AG04449 (cell line): ENCODE measurements at regions of chr2 and their contacts with region 1.

Region 1: GRCh38 chr2:18378020-18378653 is 182.3 kb downstream of the RDH14 start:
- DNase-seq: no peak
- H3K4me3 ChIP-seq: no peak overlapping the region
- CTCF ChIP-seq: peak; percentile 72

Region 2: GRCh38 chr2:17719562-17720371 is 658.4 kb before region 1 on chr2:
- CTCF ChIA-PET with region 1: interaction called, 14 read pairs
- POLR2A ChIA-PET with region 1: no interaction called
- DNase-seq: no peak
- H3K4me3 ChIP-seq: no peak overlapping the region
- CTCF ChIP-seq: peak; percentile 51

Region 3: DNA sequence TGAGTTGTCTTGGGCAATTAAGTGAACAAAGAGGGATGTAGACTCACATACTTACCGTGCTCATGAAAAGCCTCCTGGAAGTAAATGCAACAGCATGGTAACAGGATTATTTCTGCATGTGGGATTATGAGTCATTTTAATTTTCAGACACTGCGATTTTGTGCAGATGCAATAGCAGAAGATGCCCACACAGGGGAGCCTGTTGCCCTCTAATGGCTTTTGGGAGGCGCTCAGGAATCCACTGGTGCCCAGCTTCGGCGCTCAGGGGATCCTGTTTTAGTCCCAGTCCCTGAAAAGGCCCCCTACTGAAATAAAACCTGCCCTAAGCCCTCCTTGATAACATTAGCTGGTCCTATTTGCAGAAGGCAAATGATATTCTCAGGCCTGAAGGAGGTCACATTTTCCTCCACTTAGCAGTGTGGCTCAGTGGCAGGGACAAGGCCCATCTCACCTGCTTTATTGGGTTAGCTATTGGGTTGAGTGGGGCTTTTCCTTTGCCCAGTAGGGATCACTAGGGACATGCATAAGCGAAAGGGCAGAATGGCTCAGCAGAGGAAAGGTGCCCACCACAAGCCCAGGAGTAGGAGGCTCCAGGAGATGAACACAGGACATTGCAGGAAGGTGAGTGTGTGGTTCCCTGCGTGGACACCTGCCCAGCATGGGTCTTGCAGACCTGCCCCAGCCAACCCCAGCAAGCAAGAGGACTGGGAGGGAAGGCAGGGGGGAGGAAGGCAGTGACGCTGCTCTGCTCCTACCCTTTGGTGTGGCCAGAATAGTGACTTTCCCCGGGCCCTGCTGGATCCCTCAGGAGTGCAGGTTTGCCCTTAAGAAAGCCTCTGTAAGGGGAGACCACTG is 526.2 kb before region 1 on chr2:
- CTCF ChIA-PET with region 1: interaction called, 85 read pairs
- POLR2A ChIA-PET with region 1: no interaction called
- DNase-seq: peak; percentile 10
- H3K4me3 ChIP-seq: no peak overlapping the region
- CTCF ChIP-seq: peak; percentile 81

Region 4: GRCh38 chr2:18154818-18155217 is 223.3 kb before region 1 on chr2:
- CTCF ChIA-PET with region 1: interaction called, 55 read pairs
- POLR2A ChIA-PET with region 1: no interaction called
- DNase-seq: no peak
- H3K4me3 ChIP-seq: no peak overlapping the region
- CTCF ChIP-seq: no peak

Region 5: DNA sequence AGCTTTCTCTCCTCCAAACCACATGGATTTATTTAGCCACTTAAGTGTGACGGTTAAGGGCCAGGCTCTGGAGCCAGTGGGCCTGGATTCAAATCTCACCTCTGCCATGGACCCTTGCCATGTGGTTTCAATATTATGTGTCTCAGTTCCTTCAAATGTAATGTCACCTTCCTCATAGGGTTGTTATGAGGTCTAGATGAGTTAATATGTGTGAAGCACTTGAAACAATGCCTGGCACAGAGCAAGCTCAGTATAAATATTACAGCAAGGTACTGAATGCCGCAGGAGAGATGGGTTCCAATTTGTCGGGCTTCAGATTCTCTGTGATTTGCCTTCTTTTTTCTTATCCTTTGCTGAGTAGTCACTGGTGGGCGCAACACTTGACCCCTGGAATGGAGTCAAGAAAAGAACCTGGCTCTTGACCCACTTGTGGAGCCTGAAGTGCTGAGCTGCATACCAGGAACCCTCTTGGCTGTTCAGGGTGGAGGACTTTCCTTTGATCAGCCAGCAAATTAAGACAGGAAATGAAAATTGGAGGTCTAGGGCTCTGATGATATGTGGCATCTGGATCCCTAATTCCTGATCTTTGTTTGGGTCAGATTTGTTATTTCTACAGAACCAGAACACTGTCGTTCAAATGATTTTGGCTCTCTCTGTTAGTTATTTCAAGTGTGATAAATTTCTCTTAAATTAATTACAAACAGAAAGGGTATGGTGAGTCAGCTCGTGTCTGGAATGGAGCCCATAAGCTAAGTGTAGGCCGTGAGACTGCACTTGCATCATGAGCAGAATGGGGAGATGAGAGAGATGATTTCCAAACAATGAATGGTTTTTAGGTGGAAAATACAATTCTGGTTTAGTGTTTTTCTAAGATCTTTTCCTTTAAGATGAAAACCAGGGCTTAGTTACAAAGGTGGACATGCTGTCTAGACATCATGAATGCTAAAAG is 206.7 kb before region 1 on chr2:
- CTCF ChIA-PET with region 1: interaction called, 48 read pairs
- POLR2A ChIA-PET with region 1: no interaction called
- DNase-seq: no peak
- H3K4me3 ChIP-seq: no peak overlapping the region
- CTCF ChIP-seq: no peak

Region 6: DNA sequence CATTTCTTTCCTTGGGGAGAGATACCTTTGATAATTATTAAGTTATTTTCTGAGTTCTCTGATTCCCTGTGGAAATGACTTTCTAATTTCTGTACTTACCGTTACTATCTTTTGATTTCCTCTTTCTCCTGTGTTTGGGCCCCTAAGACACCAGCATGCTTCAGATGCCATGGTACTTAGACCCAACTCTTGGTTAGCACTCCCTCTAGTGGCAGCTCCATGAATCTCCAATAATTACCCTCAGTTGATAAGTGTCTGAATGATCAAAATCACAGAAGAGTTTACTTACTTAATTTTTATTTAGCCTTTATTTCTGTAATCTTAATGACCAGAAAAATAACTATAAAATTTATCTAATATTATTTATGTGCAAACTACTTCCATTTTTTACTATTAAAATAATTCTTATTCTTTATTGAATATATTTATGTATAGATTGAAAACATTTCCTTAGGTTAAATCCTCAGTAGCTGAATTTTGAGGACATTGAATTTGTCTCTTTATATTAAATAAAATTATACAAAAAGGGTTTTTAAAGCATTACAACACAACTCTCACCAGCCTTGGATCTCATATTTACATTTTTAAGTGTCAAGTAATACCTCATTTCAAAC is 199.3 kb before region 1 on chr2:
- CTCF ChIA-PET with region 1: interaction called, 48 read pairs
- POLR2A ChIA-PET with region 1: no interaction called
- DNase-seq: no peak
- H3K4me3 ChIP-seq: no peak overlapping the region
- CTCF ChIP-seq: peak; percentile 66

Region 7: DNA sequence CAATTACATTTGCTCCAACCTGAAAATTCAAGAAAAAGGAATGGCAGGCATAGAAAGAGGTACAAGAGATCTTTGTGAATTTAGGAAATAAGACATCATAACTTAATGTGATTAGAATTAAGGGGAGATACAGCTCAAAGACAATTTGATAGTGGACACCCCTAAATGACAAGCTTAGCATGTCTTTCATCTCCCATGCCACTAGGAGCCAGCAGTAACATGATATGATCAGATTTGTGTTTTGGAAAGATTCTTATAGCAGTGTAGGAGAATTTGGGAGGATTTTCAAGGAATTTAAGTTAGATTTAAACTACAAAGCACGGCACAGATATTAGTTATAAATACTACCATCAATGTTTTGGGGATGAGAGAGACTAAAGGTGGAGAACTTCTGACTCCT is 158.5 kb before region 1 on chr2:
- CTCF ChIA-PET with region 1: interaction called, 54 read pairs
- POLR2A ChIA-PET with region 1: no interaction called
- DNase-seq: no peak
- H3K4me3 ChIP-seq: no peak overlapping the region
- CTCF ChIP-seq: peak; percentile 33